ENCODE measurements at regions of chr13 and their contacts with region 1.

Region 1: DNA sequence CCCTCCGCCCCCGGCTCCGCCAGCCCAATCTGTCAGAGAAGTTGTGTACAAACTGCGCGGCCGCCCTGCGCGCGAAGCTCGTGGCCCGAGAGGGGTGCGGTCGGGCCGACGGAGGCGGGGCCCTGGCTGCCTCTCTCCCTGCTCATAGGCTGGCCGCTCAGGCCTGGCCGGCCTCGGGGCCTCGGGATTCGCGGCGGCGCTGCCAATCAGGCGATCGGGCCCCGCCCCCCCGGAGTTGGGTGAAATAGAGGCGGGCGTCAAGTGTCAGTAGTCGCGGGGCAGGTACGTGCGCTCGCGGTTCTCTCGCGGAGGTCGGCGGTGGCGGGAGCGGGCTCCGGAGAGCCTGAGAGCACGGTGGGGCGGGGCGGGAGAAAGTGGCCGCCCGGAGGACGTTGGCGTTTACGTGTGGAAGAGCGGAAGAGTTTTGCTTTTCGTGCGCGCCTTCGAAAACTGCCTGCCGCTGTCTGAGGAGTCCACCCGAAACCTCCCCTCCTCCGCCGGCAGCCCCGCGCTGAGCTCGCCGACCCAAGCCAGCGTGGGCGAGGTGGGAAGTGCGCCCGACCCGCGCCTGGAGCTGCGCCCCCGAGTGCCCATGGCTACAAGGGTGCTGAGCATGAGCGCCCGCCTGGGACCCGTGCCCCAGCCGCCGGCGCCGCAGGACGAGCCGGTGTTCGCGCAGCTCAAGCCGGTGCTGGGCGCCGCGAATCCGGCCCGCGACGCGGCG is at the start of gene KLF5:
- DNase-seq: peak; percentile 94
- ATAC-seq: peak; percentile 91
- H3K4me3 ChIP-seq: peak within 1 kb of the TSS; percentile 75 to 86
- H3K27ac ChIP-seq: peak within 1 kb of the TSS; percentile 83
- H3K4me1 ChIP-seq: peaks cover 34 to 61% of the 10 kb centered on the region in 2 experiments
- H3K27me3 ChIP-seq: no peaks in the 10 kb centered on the region
- CTCF ChIP-seq: no peak
- POLR2A ChIP-seq: peak; percentile 94
- RAD21 ChIP-seq: 0 out of 2 replicates have a peak, but pooled peaks have one; percentile 4
- total RNA-seq, gene KLF5: 59.2 TPM

Region 2: GRCh38 chr13:72839831-72840426 is 219.0 kb before region 1 on chr13:
- CTCF ChIA-PET with region 1: interaction called, 4 read pairs
- POLR2A ChIA-PET with region 1: no interaction called
- RAD21 ChIA-PET with region 1: no interaction called
- intact Hi-C with region 1: loop called (anchors 5 kb)
- DNase-seq: peak; percentile 47
- ATAC-seq: peak; percentile 100
- H3K4me3 ChIP-seq: no peak overlapping the region
- H3K27ac ChIP-seq: no peak overlapping the region
- H3K4me1 ChIP-seq: peaks cover 0 to 5% of the 10 kb centered on the region in 2 experiments; a peak in 1 of 4 replicates
- H3K27me3 ChIP-seq: no peaks in the 10 kb centered on the region
- CTCF ChIP-seq: peak; percentile 53 to 88 (median 78); a peak in 5 of 6 replicates
- POLR2A ChIP-seq: no peak
- RAD21 ChIP-seq: peak; percentile 91

Region 3: DNA sequence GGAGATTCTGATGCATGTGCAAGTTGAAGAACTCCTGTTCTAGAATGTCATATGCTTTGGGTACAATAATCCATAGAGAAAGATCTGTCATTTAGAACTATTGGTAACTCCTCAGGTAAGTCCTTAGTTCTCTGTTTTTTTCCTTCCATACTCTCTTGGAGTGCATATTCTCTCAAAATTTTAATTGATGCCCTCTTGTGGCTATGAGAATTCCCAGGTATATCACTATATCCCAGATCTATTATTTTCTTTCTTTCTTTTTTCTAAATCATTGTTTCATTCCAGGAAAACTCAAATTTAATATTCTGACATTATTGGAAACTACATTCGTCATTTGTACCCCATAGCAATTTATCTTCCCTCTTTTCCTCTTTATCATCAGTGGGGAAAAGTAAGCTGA is 485.3 kb after region 1 on chr13:
- CTCF ChIA-PET with region 1: no interaction called
- POLR2A ChIA-PET with region 1: no interaction called
- RAD21 ChIA-PET with region 1: no interaction called
- intact Hi-C with region 1: loop called (anchors 10 kb)
- DNase-seq: no peak
- ATAC-seq: no peak; the same call in 1 of the 2 replicates
- H3K4me3 ChIP-seq: no peak overlapping the region
- H3K27ac ChIP-seq: no peak overlapping the region
- H3K4me1 ChIP-seq: peaks cover 0 to 6% of the 10 kb centered on the region in 2 experiments; a peak in 1 of 4 replicates
- H3K27me3 ChIP-seq: no peaks in the 10 kb centered on the region
- CTCF ChIP-seq: peak in 1 of 3 experiments; percentile 41; a peak in 2 of 6 replicates
- POLR2A ChIP-seq: no peak
- RAD21 ChIP-seq: peak; percentile 42; the same call in 1 of the 2 replicates

Measured in HCT116 (cell line).